K562 (cell line): ENCODE measurements at regions of chr12 and their contacts with region 1.

Region 1: GRCh38 chr12:54005853-54006686 is 2.7 kb upstream of the HOXC8 start:
- DNase-seq: peak; percentile 82 to 91 (median 86)
- ATAC-seq: peak; percentile 90
- H3K4me3 ChIP-seq: no peak overlapping the region
- H3K27ac ChIP-seq: no peak overlapping the region
- H3K4me1 ChIP-seq: peaks cover 24 to 41% of the 10 kb centered on the region in 2 experiments
- H3K27me3 ChIP-seq: no peaks in the 10 kb centered on the region
- CTCF ChIP-seq: peak; percentile 91 to 96 (median 92)
- EP300 ChIP-seq: no peak
- POLR2A ChIP-seq: no peak
- RAD21 ChIP-seq: peak; percentile 96 to 98

Region 2: GRCh38 chr12:54017878-54018467 is 11.9 kb after region 1 on chr12:
- CTCF ChIA-PET with region 1: interaction called, 3 read pairs
- POLR2A ChIA-PET with region 1: interaction called, 10 read pairs
- in situ Hi-C with region 1: no loop called
- intact Hi-C with region 1: no loop called
- DNase-seq: peak; percentile 95 to 98 (median 98)
- ATAC-seq: peak; percentile 88
- H3K4me3 ChIP-seq: peak overlapping the region; percentile 60
- H3K27ac ChIP-seq: peak overlapping the region; percentile 86
- H3K4me1 ChIP-seq: peaks cover 10 to 47% of the 10 kb centered on the region in 2 experiments
- H3K27me3 ChIP-seq: no peaks in the 10 kb centered on the region
- CTCF ChIP-seq: no peak
- EP300 ChIP-seq: no peak
- POLR2A ChIP-seq: peak; percentile 78
- RAD21 ChIP-seq: no peak

Region 3: GRCh38 chr12:54060975-54061778 is 55.1 kb after region 1 on chr12:
- CTCF ChIA-PET with region 1: no interaction called
- POLR2A ChIA-PET with region 1: no interaction called
- in situ Hi-C with region 1: no loop called
- intact Hi-C with region 1: no loop called
- DNase-seq: no peak
- ATAC-seq: no peak
- H3K4me3 ChIP-seq: no peak overlapping the region
- H3K27ac ChIP-seq: no peak overlapping the region
- H3K4me1 ChIP-seq: peaks cover 0 to 6% of the 10 kb centered on the region in 2 experiments; a peak in 2 of 5 replicates
- H3K27me3 ChIP-seq: peaks cover 35 to 44% of the 10 kb centered on the region in 2 experiments; a peak in 4 of 5 replicates
- CTCF ChIP-seq: no peak
- EP300 ChIP-seq: no peak
- POLR2A ChIP-seq: no peak
- RAD21 ChIP-seq: no peak

Region 4: GRCh38 chr12:54134850-54135249 is 128.8 kb after region 1 on chr12:
- CTCF ChIA-PET with region 1: interaction called, 5 read pairs
- POLR2A ChIA-PET with region 1: no interaction called
- in situ Hi-C with region 1: no loop called
- intact Hi-C with region 1: loop called (anchors 1 kb)
- DNase-seq: peak in 1 of 4 experiments; percentile 29
- ATAC-seq: peak; percentile 72
- H3K4me3 ChIP-seq: no peak overlapping the region
- H3K27ac ChIP-seq: no peak overlapping the region
- H3K4me1 ChIP-seq: no peaks in the 10 kb centered on the region
- H3K27me3 ChIP-seq: peaks cover 27 to 72% of the 10 kb centered on the region in 2 experiments; a peak in 4 of 5 replicates
- CTCF ChIP-seq: peak; percentile 31 to 46 (median 42); a peak in 4 of 6 replicates
- EP300 ChIP-seq: no peak
- POLR2A ChIP-seq: no peak
- RAD21 ChIP-seq: peak; percentile 19 to 68; a peak in 3 of 4 replicates

Region 5: GRCh38 chr12:54173066-54173726 is 167.1 kb after region 1 on chr12:
- CTCF ChIA-PET with region 1: no interaction called
- POLR2A ChIA-PET with region 1: no interaction called
- in situ Hi-C with region 1: no loop called
- intact Hi-C with region 1: no loop called
- DNase-seq: peak in 2 of 4 experiments; percentile 38 to 39
- ATAC-seq: peak; percentile 43
- H3K4me3 ChIP-seq: peak overlapping the region; percentile 21; the same call in 1 of the 2 replicates
- H3K27ac ChIP-seq: no peak overlapping the region
- H3K4me1 ChIP-seq: peaks cover 12 to 15% of the 10 kb centered on the region in 2 experiments; a peak in 4 of 5 replicates
- H3K27me3 ChIP-seq: peaks cover 24 to 31% of the 10 kb centered on the region in 2 experiments
- CTCF ChIP-seq: no peak
- EP300 ChIP-seq: no peak
- POLR2A ChIP-seq: no peak
- RAD21 ChIP-seq: no peak

Region 6: GRCh38 chr12:54201001-54201794 is 195.1 kb after region 1 on chr12:
- CTCF ChIA-PET with region 1: interaction called, 42 read pairs
- POLR2A ChIA-PET with region 1: interaction called, 8 read pairs
- in situ Hi-C with region 1: no loop called
- intact Hi-C with region 1: no loop called
- DNase-seq: peak; percentile 82 to 86 (median 84)
- ATAC-seq: peak; percentile 92
- H3K4me3 ChIP-seq: no peak overlapping the region
- H3K27ac ChIP-seq: no peak overlapping the region
- H3K4me1 ChIP-seq: peaks cover 28 to 31% of the 10 kb centered on the region in 2 experiments
- H3K27me3 ChIP-seq: peaks cover 2 to 5% of the 10 kb centered on the region in 2 experiments; a peak in 2 of 5 replicates
- CTCF ChIP-seq: peak; percentile 98 to 99 (median 98)
- EP300 ChIP-seq: no peak
- POLR2A ChIP-seq: no peak
- RAD21 ChIP-seq: peak; percentile 77 to 87

Region 7: GRCh38 chr12:54214553-54215406 is 208.7 kb after region 1 on chr12:
- CTCF ChIA-PET with region 1: interaction called, 13 read pairs
- POLR2A ChIA-PET with region 1: interaction called, 3 read pairs
- in situ Hi-C with region 1: no loop called
- intact Hi-C with region 1: no loop called
- DNase-seq: peak; percentile 88 to 95 (median 94)
- ATAC-seq: peak; percentile 91
- H3K4me3 ChIP-seq: peak overlapping the region; percentile 44
- H3K27ac ChIP-seq: peak overlapping the region; percentile 50; the same call in 2 of the 3 replicates
- H3K4me1 ChIP-seq: peaks cover 25 to 48% of the 10 kb centered on the region in 2 experiments
- H3K27me3 ChIP-seq: no peaks in the 10 kb centered on the region
- CTCF ChIP-seq: peak; percentile 99 to 100 (median 99)
- EP300 ChIP-seq: peak; percentile 40; the same call in 1 of the 2 replicates
- POLR2A ChIP-seq: peak; percentile 47; the same call in 1 of the 2 replicates
- RAD21 ChIP-seq: peak; percentile 70 to 81